Prostate gland (tissue), 2 donors: ENCODE measurements at regions of chr12 and their contacts with region 1.

Region 1: DNA sequence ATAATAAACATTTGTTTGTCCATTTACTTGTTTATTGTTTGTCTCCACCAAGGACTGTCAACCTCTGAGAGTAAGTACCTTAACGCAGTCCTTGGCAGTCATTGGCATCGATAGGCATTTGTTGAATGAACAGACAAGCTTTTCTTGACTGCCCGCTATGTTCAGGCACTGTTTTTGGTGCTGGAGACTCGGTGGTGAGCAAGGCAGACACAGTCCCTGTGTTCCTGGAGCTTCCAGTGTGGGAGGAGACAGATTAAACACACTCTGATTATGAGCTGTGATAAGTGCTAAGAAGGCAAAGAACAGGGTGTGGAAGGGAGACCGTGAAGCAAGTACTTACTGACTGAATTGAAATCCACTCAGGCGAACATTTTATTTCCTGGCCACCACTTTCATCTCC is 1.2 kb downstream of the ATP6V0A2 start:
- DNase-seq: no peak
- H3K4me3 ChIP-seq: peak overlapping the region; percentile 98 to 99
- H3K27ac ChIP-seq: no peak overlapping the region
- H3K4me1 ChIP-seq: no peaks in the 10 kb centered on the region
- H3K27me3 ChIP-seq: no peaks in the 10 kb centered on the region
- CTCF ChIP-seq: no peak
- POLR2A ChIP-seq: no peak

Region 2: DNA sequence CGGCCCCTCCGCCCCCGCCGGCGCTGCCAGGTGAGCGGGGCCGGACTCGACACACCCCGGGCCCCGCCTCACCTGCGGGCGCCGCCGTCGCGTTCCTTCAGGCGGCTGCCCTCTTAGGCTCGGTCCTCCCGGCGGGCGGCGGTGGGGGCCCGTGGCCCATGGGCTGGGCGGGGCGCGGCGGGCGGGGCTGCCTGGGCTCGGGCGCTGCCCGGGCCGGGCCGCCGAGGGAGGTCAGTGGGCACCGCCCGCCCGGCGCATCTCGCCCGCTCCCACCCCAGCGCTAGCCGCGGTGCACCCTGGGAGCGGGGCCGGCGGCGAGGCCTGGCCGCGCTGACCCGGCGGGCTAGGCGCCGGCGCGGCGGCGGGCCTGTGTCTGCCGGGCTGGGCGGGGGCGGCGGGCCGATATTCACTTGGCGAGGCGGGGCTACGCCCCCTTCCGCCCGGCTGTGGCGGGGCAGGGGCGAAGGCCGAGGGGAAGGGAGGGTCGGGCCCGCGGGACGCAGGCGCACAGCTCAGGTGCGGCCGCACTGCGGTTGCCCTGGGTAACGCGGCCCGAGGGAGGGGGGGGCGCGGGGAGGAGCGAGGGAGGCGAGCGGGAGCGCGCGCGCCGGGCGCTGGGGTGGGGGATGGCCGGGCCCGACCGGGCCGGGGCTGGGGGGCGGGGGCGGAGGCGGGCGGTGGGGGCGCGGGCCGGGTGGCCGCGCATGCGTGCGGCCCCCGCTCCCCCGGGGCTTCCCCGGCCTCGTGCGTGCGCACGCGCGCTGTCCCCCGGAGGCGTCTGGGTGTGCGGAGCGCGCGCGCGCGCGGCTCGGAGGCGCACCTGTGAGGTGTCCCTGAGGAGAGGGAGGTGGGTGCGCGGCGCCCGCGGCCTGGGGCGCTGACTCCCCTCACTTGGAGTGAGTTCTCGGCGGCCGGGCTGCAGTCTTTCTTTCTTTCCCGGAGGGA is 259.3 kb after region 1 on chr12 and contains the starts of genes CCDC92 and ZNF664:
- intact Hi-C with region 1: loop called (anchors 2 kb)
- DNase-seq: peak; percentile 91
- H3K4me3 ChIP-seq: peak within 1 kb of the TSS; percentile 99
- H3K27ac ChIP-seq: peak within 1 kb of the TSS; percentile 94 to 95
- H3K4me1 ChIP-seq: peaks cover 2% of the 10 kb centered on the region
- H3K27me3 ChIP-seq: no peaks in the 10 kb centered on the region
- CTCF ChIP-seq: peak in 2 of 4 experiments; percentile 34 to 35
- POLR2A ChIP-seq: peak; percentile 79
- total RNA-seq, gene CCDC92: 22.4 to 42.9 TPM
- total RNA-seq, gene ZNF664: 59.4 to 70.5 TPM